H1 (cell line): ENCODE measurements at regions of chr13 and their contacts with region 1.

Region 1: DNA sequence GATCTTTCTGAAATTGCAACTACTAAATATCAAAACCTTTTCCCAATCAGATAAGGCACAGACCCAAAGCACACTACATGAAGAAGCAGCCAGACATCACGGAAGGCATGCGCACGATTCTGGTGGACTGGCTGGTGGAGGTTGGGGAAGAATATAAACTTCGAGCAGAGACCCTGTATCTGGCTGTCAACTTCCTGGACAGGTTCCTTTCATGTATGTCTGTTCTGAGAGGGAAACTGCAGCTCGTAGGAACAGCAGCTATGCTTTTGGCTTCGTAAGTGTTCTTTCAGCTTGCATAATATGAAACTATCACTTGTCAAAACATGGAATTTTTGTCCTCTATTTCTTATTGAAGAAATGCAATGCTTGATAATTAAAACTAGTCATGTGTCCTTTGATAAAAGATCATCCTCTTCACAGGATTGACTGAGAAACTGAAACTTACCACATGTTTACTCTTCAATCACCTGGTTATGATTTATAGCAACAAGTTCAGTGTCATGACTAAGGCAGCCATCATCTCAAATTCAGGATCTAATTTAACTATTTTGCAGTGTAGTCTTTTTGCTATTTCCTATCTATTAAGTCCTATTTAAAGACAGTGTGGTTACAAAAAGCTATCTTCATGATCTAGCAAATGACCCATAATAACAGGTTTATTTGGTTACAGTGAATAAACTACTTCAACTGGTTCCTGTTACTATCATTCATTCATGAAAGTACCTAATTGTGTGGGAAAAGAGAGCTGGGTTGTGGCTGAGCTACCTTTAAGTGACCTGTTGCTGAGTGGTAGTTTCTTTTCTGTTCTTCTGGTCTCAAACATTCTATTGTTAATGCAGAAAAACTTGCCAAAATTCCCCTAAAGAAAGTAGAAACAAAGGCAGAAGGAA is 6.5 kb downstream of the CCNA1 start:
- DNase-seq: no peak
- H3K4me3 ChIP-seq: no peak overlapping the region
- H3K27ac ChIP-seq: no peak overlapping the region
- H3K4me1 ChIP-seq: no peaks in the 10 kb centered on the region
- H3K27me3 ChIP-seq: peaks cover 0 to 7% (median 2%) of the 10 kb centered on the region in 4 experiments; a peak in 4 of 7 replicates
- CTCF ChIP-seq: no peak
- EP300 ChIP-seq: no peak
- POLR2A ChIP-seq: no peak
- RAD21 ChIP-seq: no peak

Region 2: GRCh38 chr13:36453516-36453915 is 14.7 kb after region 1 on chr13:
- CTCF ChIA-PET with region 1: interaction called, 15 read pairs
- POLR2A ChIA-PET with region 1: no interaction called
- DNase-seq: no peak
- H3K4me3 ChIP-seq: no peak overlapping the region
- H3K27ac ChIP-seq: no peak overlapping the region
- H3K4me1 ChIP-seq: peaks cover 2 to 9% (median 7%) of the 10 kb centered on the region in 4 experiments; a peak in 4 of 7 replicates
- H3K27me3 ChIP-seq: no peaks in the 10 kb centered on the region
- CTCF ChIP-seq: peak in 2 of 3 experiments; percentile 56 to 57; a peak in 3 of 4 replicates
- EP300 ChIP-seq: no peak
- POLR2A ChIP-seq: no peak
- RAD21 ChIP-seq: peak; percentile 85 to 89

Region 3: GRCh38 chr13:36571444-36571843 is 132.6 kb after region 1 on chr13:
- CTCF ChIA-PET with region 1: no interaction called
- POLR2A ChIA-PET with region 1: no interaction called
- DNase-seq: no peak
- H3K4me3 ChIP-seq: no peak overlapping the region
- H3K27ac ChIP-seq: no peak overlapping the region
- H3K4me1 ChIP-seq: no peaks in the 10 kb centered on the region
- H3K27me3 ChIP-seq: no peaks in the 10 kb centered on the region
- CTCF ChIP-seq: no peak
- EP300 ChIP-seq: no peak
- POLR2A ChIP-seq: no peak
- RAD21 ChIP-seq: no peak